CD8-positive, alpha-beta T cell (primary cell): ENCODE measurements at regions of chr6 and their contacts with region 1.

Region 1: GRCh38 chr6:26270903-26271667 is 93.9 kb upstream of the BTN3A2 start:
- DNase-seq: peak; percentile 68 to 91 (median 80)
- ATAC-seq: peak; percentile 22
- H3K4me3 ChIP-seq: peak overlapping the region; percentile 65 to 67
- H3K4me3 Mint-ChIP-seq: no peak overlapping the region
- H3K27ac ChIP-seq: peak overlapping the region; percentile 73 to 92
- H3K27ac Mint-ChIP-seq: peak overlapping the region; percentile 73
- H3K4me1 ChIP-seq: peaks cover 22% of the 10 kb centered on the region
- H3K4me1 Mint-ChIP-seq: peaks cover 13% of the 10 kb centered on the region
- H3K27me3 ChIP-seq: no peaks in the 10 kb centered on the region
- H3K27me3 Mint-ChIP-seq: no peaks in the 10 kb centered on the region
- CTCF ChIP-seq: no peak

Region 2: GRCh38 chr6:26045065-26045927 is 225.8 kb before region 1 on chr6:
- CTCF ChIA-PET with region 1: no interaction called
- POLR2A ChIA-PET with region 1: interaction called, 24 read pairs
- intact Hi-C with region 1: no loop called
- DNase-seq: peak; percentile 54 to 93 (median 79)
- ATAC-seq: peak; percentile 59
- H3K4me3 ChIP-seq: peak overlapping the region; percentile 67 to 76
- H3K4me3 Mint-ChIP-seq: peak overlapping the region; percentile 89
- H3K27ac ChIP-seq: peak overlapping the region; percentile 73 to 81
- H3K27ac Mint-ChIP-seq: peak overlapping the region; percentile 98
- H3K4me1 ChIP-seq: peaks cover 7% of the 10 kb centered on the region
- H3K4me1 Mint-ChIP-seq: peaks cover 14% of the 10 kb centered on the region
- H3K27me3 ChIP-seq: no peaks in the 10 kb centered on the region
- H3K27me3 Mint-ChIP-seq: no peaks in the 10 kb centered on the region
- CTCF ChIP-seq: no peak

Region 3: DNA sequence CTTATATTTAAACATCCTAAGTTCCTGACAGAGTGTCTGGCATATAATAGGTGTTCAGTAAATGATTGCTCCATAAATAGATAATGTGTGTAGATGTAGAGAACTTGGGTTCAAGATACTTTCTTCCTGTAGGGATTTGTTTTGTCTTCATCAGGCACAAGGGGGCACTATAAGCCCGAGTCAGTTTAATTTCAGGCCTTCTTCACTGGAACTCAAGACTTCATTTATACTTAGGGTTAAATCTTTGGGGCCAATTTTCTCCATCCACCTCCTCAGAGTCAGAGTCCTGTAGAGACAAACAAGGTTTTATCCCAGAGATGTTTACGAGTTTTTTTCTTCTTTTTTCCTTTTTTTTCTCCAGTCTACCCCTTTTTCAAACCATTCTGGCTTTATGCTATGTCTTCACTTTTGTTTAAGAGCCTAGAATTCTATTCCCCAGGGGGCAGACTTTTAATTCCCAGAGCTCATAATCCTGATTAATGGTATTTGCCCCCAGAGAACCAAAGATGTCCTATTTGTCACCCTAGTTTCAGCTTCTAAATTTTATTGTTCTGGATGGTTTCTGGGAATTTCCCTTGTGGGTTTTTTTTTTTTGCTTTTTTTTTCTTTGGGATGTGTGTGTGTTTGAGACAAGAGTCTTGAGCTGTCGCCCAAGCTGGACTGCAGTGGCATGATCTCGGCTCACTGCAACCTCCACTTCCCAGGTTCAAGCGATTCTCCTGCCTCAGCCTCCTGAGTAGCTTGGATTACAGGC is 95.5 kb before region 1 on chr6:
- CTCF ChIA-PET with region 1: interaction called, 5 read pairs
- POLR2A ChIA-PET with region 1: interaction called, 17 read pairs
- intact Hi-C with region 1: loop called in 1 of 2 experiments (anchors 5 kb)
- DNase-seq: peak in 7 of 9 experiments; percentile 33 to 87 (median 53)
- ATAC-seq: no peak
- H3K4me3 ChIP-seq: no peak overlapping the region
- H3K4me3 Mint-ChIP-seq: peak overlapping the region; percentile 3
- H3K27ac ChIP-seq: no peak overlapping the region
- H3K27ac Mint-ChIP-seq: peak overlapping the region; percentile 63
- H3K4me1 ChIP-seq: peaks cover 26% of the 10 kb centered on the region
- H3K4me1 Mint-ChIP-seq: peaks cover 39% of the 10 kb centered on the region
- H3K27me3 ChIP-seq: no peaks in the 10 kb centered on the region
- H3K27me3 Mint-ChIP-seq: no peaks in the 10 kb centered on the region
- CTCF ChIP-seq: peak; percentile 93

Region 4: DNA sequence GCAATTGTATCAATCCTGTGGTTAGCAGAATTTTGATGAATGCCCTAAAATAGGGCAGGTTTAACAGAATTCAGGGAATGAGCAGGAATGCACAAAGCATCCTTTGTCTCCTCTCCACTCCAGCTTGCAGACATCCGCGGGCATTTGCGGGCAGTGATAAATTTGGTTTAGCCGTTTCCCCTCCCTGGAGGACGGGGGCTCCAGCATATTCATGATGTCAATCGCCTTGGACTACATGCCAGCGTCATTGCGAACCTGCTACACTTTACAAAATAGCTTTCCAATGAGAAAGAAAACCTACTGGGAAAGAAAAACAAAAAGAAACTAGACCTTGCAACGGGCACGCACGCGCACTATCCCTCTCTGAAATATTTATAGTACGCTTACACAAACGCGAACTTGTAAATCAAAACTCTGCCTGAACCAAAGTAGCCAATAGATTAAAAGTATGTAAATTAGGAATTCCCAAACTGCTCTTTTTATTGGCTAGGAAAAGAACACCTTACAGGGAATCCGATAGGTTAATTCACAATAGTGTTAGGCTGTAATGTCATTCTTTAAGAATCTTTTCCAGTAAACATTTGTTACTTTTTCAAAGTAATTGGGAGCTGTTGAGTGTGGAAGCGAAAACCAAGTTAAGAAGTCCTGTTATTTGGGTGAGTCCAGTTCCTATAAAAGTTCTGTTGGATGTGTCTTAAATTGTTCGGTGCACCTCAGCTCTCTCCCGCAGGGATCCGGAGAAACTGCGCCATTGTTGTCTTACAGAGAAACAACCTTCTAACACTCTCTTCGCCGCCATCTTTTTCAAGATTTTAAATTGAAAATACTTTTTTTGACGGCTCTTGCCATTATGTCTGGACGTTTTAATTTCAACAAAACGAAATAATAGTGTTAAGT is 47.2 kb before region 1 on chr6:
- CTCF ChIA-PET with region 1: interaction called, 3 read pairs
- POLR2A ChIA-PET with region 1: interaction called, 55 read pairs
- intact Hi-C with region 1: loop called in 1 of 2 experiments (anchors 1 kb)
- DNase-seq: peak in 8 of 9 experiments; percentile 42 to 90 (median 72)
- ATAC-seq: peak; percentile 85
- H3K4me3 ChIP-seq: peak overlapping the region; percentile 64 to 72
- H3K4me3 Mint-ChIP-seq: no peak overlapping the region
- H3K27ac ChIP-seq: peak overlapping the region; percentile 76 to 87
- H3K27ac Mint-ChIP-seq: no peak overlapping the region
- H3K4me1 ChIP-seq: peaks cover 20% of the 10 kb centered on the region
- H3K4me1 Mint-ChIP-seq: peaks cover 24% of the 10 kb centered on the region
- H3K27me3 ChIP-seq: no peaks in the 10 kb centered on the region
- H3K27me3 Mint-ChIP-seq: no peaks in the 10 kb centered on the region
- CTCF ChIP-seq: no peak

Region 5: GRCh38 chr6:26249957-26250697 is 21.0 kb before region 1 on chr6:
- CTCF ChIA-PET with region 1: interaction called, 38 read pairs
- POLR2A ChIA-PET with region 1: interaction called, 11 read pairs
- intact Hi-C with region 1: loop called (anchors 1 kb)
- DNase-seq: peak; percentile 59 to 91 (median 79)
- ATAC-seq: peak; percentile 77
- H3K4me3 ChIP-seq: peak overlapping the region; percentile 74 to 80
- H3K4me3 Mint-ChIP-seq: peak overlapping the region; percentile 90
- H3K27ac ChIP-seq: peak overlapping the region; percentile 73 to 83
- H3K27ac Mint-ChIP-seq: peak overlapping the region; percentile 96
- H3K4me1 ChIP-seq: peaks cover 15% of the 10 kb centered on the region
- H3K4me1 Mint-ChIP-seq: peaks cover 40% of the 10 kb centered on the region
- H3K27me3 ChIP-seq: no peaks in the 10 kb centered on the region
- H3K27me3 Mint-ChIP-seq: no peaks in the 10 kb centered on the region
- CTCF ChIP-seq: peak; percentile 57

Region 6: GRCh38 chr6:26322645-26323482 is 51.8 kb after region 1 on chr6:
- CTCF ChIA-PET with region 1: interaction called, 6 read pairs
- POLR2A ChIA-PET with region 1: interaction called, 9 read pairs
- intact Hi-C with region 1: loop called in 1 of 2 experiments (anchors 2 kb)
- DNase-seq: peak in 8 of 9 experiments; percentile 32 to 86 (median 58)
- ATAC-seq: peak; percentile 65
- H3K4me3 ChIP-seq: peak overlapping the region; percentile 55 to 64
- H3K4me3 Mint-ChIP-seq: peak overlapping the region; percentile 88
- H3K27ac ChIP-seq: no peak overlapping the region
- H3K27ac Mint-ChIP-seq: peak overlapping the region; percentile 90
- H3K4me1 ChIP-seq: peaks cover 5% of the 10 kb centered on the region
- H3K4me1 Mint-ChIP-seq: peaks cover 24% of the 10 kb centered on the region
- H3K27me3 ChIP-seq: peaks cover 0 to 2% of the 10 kb centered on the region in 2 experiments
- H3K27me3 Mint-ChIP-seq: peaks cover 15% of the 10 kb centered on the region
- CTCF ChIP-seq: no peak